ENCODE measurements at regions of chr11 and their contacts with region 1.

Region 1: GRCh38 chr11:45872513-45873356 is 12.7 kb upstream of the MAPK8IP1 start:
- DNase-seq: peak; percentile 56 to 69
- H3K4me3 ChIP-seq: no peak overlapping the region
- H3K27ac ChIP-seq: no peak overlapping the region
- H3K4me1 ChIP-seq: no peaks in the 10 kb centered on the region
- H3K27me3 ChIP-seq: no peaks in the 10 kb centered on the region
- CTCF ChIP-seq: peak; percentile 88

Region 2: GRCh38 chr11:45468262-45468856 is 404.4 kb before region 1 on chr11:
- CTCF ChIA-PET with region 1: no interaction called
- POLR2A ChIA-PET with region 1: no interaction called
- intact Hi-C with region 1: no loop called
- DNase-seq: no peak
- H3K4me3 ChIP-seq: no peak overlapping the region
- H3K27ac ChIP-seq: no peak overlapping the region
- H3K4me1 ChIP-seq: no peaks in the 10 kb centered on the region
- H3K27me3 ChIP-seq: peaks cover 69% of the 10 kb centered on the region
- CTCF ChIP-seq: no peak

Region 3: GRCh38 chr11:45804761-45805304 is 67.9 kb before region 1 on chr11 and contains the start of gene SLC35C1:
- CTCF ChIA-PET with region 1: no interaction called
- POLR2A ChIA-PET with region 1: no interaction called
- intact Hi-C with region 1: no loop called
- DNase-seq: peak; percentile 88 to 98
- H3K4me3 ChIP-seq: peak within 1 kb of the TSS; percentile 84
- H3K27ac ChIP-seq: no peak within 1 kb of the TSS
- H3K4me1 ChIP-seq: peaks cover 28% of the 10 kb centered on the region
- H3K27me3 ChIP-seq: no peaks in the 10 kb centered on the region
- CTCF ChIP-seq: peak; percentile 32; the same call in 1 of the 2 replicates
- total RNA-seq, gene SLC35C1: 15.2 and 15.6 TPM in 2 replicates

Region 4: DNA sequence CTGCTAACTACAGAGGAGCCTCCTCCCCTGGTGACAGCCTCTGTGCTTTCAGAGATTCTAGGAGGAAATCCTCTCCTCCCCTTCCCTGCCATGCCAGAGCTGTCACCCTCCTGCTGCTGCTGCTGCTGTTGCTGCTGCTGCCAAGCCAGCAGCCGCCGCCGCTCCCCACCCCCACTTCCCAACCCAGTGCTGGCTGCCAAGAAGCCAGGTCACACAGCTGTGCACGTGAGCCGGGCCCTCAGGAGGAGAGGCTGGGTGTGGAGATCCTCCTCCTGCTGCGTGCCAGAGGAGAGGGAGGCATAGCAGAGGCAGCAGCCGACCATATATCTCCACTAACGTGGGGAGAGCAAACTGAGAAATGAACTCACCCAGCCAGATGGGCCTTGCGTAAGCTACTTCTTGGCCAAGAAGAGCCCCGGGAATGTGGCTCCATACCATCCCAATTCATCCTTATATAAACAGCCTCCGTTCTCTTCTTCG is 13.0 kb before region 1 on chr11:
- CTCF ChIA-PET with region 1: interaction called, 11 read pairs
- POLR2A ChIA-PET with region 1: no interaction called
- intact Hi-C with region 1: no loop called
- DNase-seq: peak in 1 of 2 experiments; percentile 10
- H3K4me3 ChIP-seq: no peak overlapping the region
- H3K27ac ChIP-seq: no peak overlapping the region
- H3K4me1 ChIP-seq: no peaks in the 10 kb centered on the region
- H3K27me3 ChIP-seq: no peaks in the 10 kb centered on the region
- CTCF ChIP-seq: no peak

Region 5: DNA sequence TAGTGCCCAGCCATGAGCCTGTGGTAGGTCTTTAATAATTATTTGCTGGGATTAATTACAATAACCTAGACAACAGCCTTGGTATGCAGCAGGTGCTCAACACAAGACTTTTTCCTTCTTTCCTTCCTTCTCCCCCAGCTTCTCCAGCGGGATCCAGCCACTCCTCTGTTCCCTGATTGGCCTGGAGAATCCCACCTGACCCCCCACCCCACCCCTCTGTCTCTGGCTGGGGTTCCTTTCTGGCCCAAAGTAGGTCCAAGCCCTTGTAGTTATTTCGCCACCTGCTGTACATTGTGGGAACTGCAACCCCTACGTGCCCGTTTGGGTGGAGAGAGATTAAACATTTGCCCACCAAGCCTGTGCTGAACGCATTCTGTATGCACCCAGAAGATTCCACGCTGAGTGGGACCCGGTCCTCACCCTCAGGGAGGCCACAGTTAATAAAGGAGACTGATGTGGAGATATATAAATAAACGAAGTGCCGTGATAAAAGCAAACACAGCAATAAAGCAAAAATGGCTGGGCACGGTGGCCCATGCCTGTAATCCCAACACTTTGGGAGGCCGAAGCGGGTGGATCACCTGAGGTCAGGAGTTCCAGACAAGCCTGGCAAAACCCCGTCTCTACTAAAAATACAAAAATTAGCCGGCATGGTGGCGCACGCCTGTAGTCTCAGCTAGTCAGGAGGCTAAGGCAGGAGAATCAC is 442.5 kb after region 1 on chr11:
- CTCF ChIA-PET with region 1: interaction called, 3 read pairs
- POLR2A ChIA-PET with region 1: no interaction called
- intact Hi-C with region 1: loop called (anchors 1 kb)
- DNase-seq: peak; percentile 74 to 78
- H3K4me3 ChIP-seq: no peak overlapping the region
- H3K27ac ChIP-seq: no peak overlapping the region
- H3K4me1 ChIP-seq: peaks cover 16% of the 10 kb centered on the region
- H3K27me3 ChIP-seq: no peaks in the 10 kb centered on the region
- CTCF ChIP-seq: peak; percentile 100

Measured in PC-9 (cell line).